Posterior cingulate gyrus (tissue), 11 donors: ENCODE measurements at regions of chr11 and their contacts with region 1.

Region 1: GRCh38 chr11:90744169-90744568 is 521.3 kb upstream of the CHORDC1 start:
- DNase-seq: no peak

Region 2: GRCh38 chr11:91248199-91248807 is 504.1 kb after region 1 on chr11:
- intact Hi-C with region 1: loop called (anchors 5 kb)
- DNase-seq: peak in 2 of 10 donors; percentile 10 to 33